Heart right ventricle (tissue), 16 donors: ENCODE measurements at regions of chr2 and their contacts with region 1.

Region 1: GRCh38 chr2:15939854-15940660 is at the start of gene MYCN:
- DNase-seq: peak; percentile 27 to 65
- ATAC-seq: peak; percentile 28 to 83 (median 50)
- H3K4me3 ChIP-seq: peak within 1 kb of the TSS; percentile 40 to 75 (median 57)
- H3K27ac ChIP-seq: peak within 1 kb of the TSS in 4 of 10 donors; percentile 9 to 53 (median 38)
- H3K4me1 ChIP-seq: peaks cover 4 to 52% (median 45%) of the 10 kb centered on the region in 9 donors
- H3K27me3 ChIP-seq: peaks cover 0 to 67% (median 38%) of the 10 kb centered on the region in 7 donors
- CTCF ChIP-seq: peak in 7 of 9 donors; percentile 2 to 81 (median 77)
- total RNA-seq, gene MYCN: 0.14 to 1.4 (median 0.61) TPM

Region 2: DNA sequence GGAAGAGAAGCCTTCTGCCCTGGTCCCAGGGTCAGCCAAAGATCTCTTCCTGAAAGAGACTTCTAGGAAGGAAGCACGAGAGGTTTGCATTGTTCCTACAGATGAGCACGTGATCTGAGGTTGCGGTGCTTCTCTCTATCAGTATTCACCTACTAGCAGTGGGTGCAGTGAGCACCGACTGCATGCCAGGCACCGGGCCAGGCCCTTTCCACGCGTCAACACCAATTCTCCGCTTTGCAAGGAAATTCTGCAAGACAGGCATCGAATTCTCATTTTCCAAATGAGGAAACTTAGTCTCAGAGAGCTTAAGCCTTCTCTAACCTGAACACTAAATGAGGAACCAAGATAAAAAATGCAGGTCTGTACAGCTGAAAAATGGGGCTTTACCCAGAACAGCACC is 151.2 kb before region 1 on chr2:
- intact Hi-C with region 1: no loop called
- DNase-seq: no peak
- ATAC-seq: peak in 4 of 8 donors; percentile 11 to 45 (median 24)
- H3K4me3 ChIP-seq: no peak overlapping the region
- H3K27ac ChIP-seq: no peak overlapping the region
- H3K4me1 ChIP-seq: peaks cover 0 to 12% (median 6%) of the 10 kb centered on the region in 9 donors
- H3K27me3 ChIP-seq: peaks cover 0 to 20% (median 4%) of the 10 kb centered on the region in 7 donors
- CTCF ChIP-seq: no peak

Region 3: GRCh38 chr2:16226921-16227664 is 287.0 kb after region 1 on chr2:
- intact Hi-C with region 1: loop called in 1 of 10 experiments (anchors 5 kb)
- DNase-seq: peak in 1 of 2 donors; percentile 23
- ATAC-seq: peak in 4 of 8 donors; percentile 26 to 47 (median 34)
- H3K4me3 ChIP-seq: no peak overlapping the region
- H3K27ac ChIP-seq: no peak overlapping the region
- H3K4me1 ChIP-seq: no peaks in the 10 kb centered on the region
- H3K27me3 ChIP-seq: peaks cover 0 to 12% (median 0%) of the 10 kb centered on the region in 7 donors
- CTCF ChIP-seq: no peak

Region 4: DNA sequence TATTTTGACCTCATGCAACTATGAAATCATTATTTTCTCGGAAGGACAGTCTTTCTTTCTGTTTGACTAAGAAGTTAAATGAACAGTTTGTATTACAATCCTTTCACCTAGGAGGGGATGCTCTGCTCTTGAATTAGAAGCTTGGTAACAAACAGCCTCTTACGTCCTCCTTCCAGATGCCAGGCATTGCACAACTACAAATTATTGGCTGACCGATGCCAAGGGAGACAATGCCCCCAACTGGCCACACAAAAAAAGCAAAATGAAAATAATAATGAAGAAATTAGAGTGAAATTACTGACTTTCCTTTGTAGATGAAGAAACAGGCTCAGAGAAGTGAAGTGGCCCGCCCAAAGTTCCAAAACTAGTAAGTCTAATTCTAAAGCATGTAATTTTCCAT is 547.6 kb after region 1 on chr2:
- intact Hi-C with region 1: loop called in 9 of 10 experiments (anchors 5 to 10 kb)
- DNase-seq: no peak
- ATAC-seq: peak in 3 of 8 donors; percentile 56 to 70 (median 62)
- H3K4me3 ChIP-seq: no peak overlapping the region
- H3K27ac ChIP-seq: no peak overlapping the region
- H3K4me1 ChIP-seq: peaks cover 0 to under 1% (median 0%) of the 10 kb centered on the region in 9 donors
- H3K27me3 ChIP-seq: peaks cover 0 to 12% (median 3%) of the 10 kb centered on the region in 7 donors
- CTCF ChIP-seq: peak in 8 of 9 donors; percentile 22 to 62 (median 50)

Region 5: DNA sequence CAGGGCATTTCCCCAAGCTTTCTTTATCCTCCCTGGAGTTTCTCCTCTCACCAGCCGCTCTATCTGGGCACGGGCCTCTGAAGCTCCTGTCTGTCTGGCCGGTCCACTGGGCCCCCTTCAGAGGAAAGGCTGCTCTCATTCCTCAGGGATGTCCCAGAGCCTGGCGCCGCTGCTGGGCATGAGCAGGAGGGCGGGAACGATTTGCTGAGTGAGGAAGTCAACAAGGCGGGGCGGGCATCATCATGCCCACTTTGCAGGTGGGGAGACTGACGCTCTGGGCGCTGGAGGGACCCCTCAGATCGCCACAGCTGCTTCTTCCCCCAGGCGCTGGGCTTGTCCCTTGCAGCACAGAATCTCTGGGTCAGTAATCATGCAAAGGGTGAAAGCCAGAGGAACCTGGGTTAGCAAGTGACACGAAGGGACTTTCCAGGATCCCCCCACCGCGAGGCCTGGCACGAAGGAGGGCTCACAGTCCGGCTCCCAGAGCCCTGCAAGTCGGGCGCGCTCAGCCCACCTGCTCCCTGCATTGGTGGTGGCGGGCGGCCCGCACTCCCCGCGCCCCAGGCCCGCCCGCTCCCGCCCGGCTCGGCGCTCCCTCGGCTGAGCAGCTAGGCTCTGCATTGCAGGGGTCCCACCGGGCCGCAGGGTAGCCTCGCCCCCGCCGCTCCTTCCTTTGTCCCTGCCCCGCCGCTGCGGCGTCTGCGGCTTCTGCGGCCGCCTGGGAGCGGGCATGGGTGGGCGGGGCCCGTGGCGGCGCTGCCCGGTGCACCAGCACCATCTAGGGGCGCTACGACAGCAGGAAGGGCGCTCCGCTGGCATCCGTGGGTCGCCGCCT is 567.8 kb after region 1 on chr2:
- intact Hi-C with region 1: loop called in 7 of 10 experiments (anchors 5 to 10 kb)
- DNase-seq: peak; percentile 14 to 52
- ATAC-seq: peak; percentile 64 to 90 (median 75)
- H3K4me3 ChIP-seq: peak overlapping the region in 9 of 10 donors; percentile 34 to 53 (median 42)
- H3K27ac ChIP-seq: no peak overlapping the region
- H3K4me1 ChIP-seq: peaks cover 0 to 11% (median 5%) of the 10 kb centered on the region in 9 donors
- H3K27me3 ChIP-seq: peaks cover 0 to 63% (median 38%) of the 10 kb centered on the region in 7 donors
- CTCF ChIP-seq: peak; percentile 24 to 75 (median 69)

Region 6: GRCh38 chr2:16756831-16757644 is 817.0 kb after region 1 on chr2:
- intact Hi-C with region 1: loop called in 4 of 10 experiments (anchors 5 to 10 kb)
- DNase-seq: peak; percentile 80 to 81
- ATAC-seq: peak; percentile 78 to 94 (median 92)
- H3K4me3 ChIP-seq: no peak overlapping the region
- H3K27ac ChIP-seq: peak overlapping the region in 5 of 10 donors; percentile 39 to 61 (median 57)
- H3K4me1 ChIP-seq: peaks cover 0 to 28% (median 10%) of the 10 kb centered on the region in 9 donors
- H3K27me3 ChIP-seq: peaks cover 0 to 5% (median 0%) of the 10 kb centered on the region in 7 donors
- CTCF ChIP-seq: peak; percentile 89 to 96 (median 93)